RWPE1 (cell line): ENCODE measurements at regions of chr2 and their contacts with region 1.

Region 1: GRCh38 chr2:72991980-72992733 is 74.8 kb downstream of the EMX1 start:
- DNase-seq: no peak
- H3K27ac ChIP-seq: no peak overlapping the region
- CTCF ChIP-seq: no peak

Region 2: DNA sequence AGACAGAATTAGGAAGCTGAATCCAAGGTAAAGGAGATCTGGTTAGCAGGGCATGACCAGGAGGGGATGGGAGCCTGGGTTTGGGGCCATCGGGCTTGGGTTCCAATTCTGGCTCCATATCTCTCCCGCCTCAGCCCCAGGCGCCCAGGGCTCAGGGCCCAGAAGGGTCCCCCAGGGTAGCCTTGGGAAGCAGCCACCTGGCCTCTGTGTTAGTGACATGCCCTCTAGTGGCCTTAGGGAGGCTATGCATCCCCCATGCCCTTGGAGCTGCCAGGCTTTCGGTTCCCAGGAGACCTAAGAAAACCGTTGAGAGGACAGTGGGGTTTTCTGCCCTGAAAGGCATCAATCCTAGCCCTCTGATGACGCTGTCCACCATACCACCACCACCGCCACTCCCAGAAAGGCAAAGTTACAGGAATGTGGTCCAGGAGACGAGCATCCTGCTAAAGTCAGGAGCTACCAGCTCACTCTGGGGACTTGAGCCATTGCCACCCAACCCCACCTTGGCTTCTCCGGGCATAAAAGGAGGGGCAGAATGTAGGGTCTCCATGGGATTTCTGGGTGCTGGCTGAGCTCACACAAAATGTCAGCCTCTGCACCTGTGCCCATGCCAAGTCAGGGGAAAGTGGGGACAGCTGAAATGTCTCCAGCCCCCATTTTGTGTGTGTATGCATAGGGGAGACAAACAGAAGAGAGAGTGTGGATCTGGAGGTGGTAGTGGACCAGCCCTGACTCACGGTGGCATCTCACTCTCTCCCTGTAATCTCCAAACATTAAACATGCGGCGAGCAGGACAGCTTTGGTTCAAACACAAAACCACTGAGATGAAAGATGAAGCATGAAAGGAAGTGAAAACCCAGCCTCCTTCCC is 18.4 kb before region 1 on chr2:
- CTCF ChIA-PET with region 1: interaction called, 10 read pairs
- POLR2A ChIA-PET with region 1: no interaction called
- DNase-seq: peak; percentile 76
- H3K27ac ChIP-seq: no peak overlapping the region
- CTCF ChIP-seq: peak; percentile 81